ENCODE measurements at regions of chr2 and their contacts with region 1.

Region 1: DNA sequence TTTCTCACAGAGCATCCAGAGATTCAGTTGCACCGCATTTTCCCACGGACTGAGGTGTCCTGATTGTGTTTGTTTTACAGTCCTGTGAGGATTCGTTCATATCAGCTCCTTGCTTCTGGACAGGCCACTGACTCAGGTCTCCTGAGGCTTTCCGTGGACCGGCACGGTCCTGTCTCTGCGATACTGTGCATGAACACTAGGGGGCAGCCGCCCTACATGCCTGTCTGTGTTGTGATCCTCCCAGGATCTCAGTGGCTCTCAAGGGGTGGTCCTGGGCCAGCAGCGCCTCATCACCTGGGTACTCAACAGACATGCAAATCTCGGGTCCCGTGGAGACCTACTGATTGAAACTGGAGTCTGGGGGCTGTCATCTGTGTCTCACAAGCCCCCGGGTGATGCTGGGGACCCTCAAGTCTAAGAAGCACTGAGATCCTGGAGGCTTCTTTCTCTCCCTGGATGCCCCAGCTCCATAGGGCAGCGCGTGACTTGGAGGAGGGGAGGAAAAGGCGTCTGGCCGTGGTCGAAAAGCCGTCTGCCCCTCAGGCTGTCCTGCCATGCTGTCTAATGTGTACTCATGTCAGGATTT is 28.9 kb downstream of the IL1R2 start:
- DNase-seq: peak; percentile 61
- ATAC-seq: peak; percentile 99
- H3K4me3 ChIP-seq: no peak overlapping the region
- H3K27ac ChIP-seq: no peak overlapping the region
- H3K4me1 ChIP-seq: no peaks in the 10 kb centered on the region
- H3K27me3 ChIP-seq: no peaks in the 10 kb centered on the region
- CTCF ChIP-seq: peak; percentile 89 to 98 (median 97)
- POLR2A ChIP-seq: no peak
- RAD21 ChIP-seq: peak; percentile 97

Region 2: GRCh38 chr2:101998896-101999789 is 21.5 kb before region 1 on chr2:
- CTCF ChIA-PET with region 1: no interaction called
- POLR2A ChIA-PET with region 1: no interaction called
- RAD21 ChIA-PET with region 1: no interaction called
- intact Hi-C with region 1: no loop called
- DNase-seq: no peak
- ATAC-seq: peak; percentile 71
- H3K4me3 ChIP-seq: no peak overlapping the region
- H3K27ac ChIP-seq: no peak overlapping the region
- H3K4me1 ChIP-seq: no peaks in the 10 kb centered on the region; a peak in 1 of 4 replicates
- H3K27me3 ChIP-seq: no peaks in the 10 kb centered on the region
- CTCF ChIP-seq: no peak
- POLR2A ChIP-seq: no peak
- RAD21 ChIP-seq: no peak

Region 3: GRCh38 chr2:102063941-102064678 is 43.4 kb after region 1 on chr2:
- CTCF ChIA-PET with region 1: no interaction called
- POLR2A ChIA-PET with region 1: no interaction called
- RAD21 ChIA-PET with region 1: no interaction called
- intact Hi-C with region 1: no loop called
- DNase-seq: peak; percentile 33
- ATAC-seq: peak; percentile 79
- H3K4me3 ChIP-seq: no peak overlapping the region
- H3K27ac ChIP-seq: no peak overlapping the region
- H3K4me1 ChIP-seq: peaks cover 11 to 33% of the 10 kb centered on the region in 2 experiments
- H3K27me3 ChIP-seq: no peaks in the 10 kb centered on the region
- CTCF ChIP-seq: no peak
- POLR2A ChIP-seq: no peak
- RAD21 ChIP-seq: no peak

Region 4: GRCh38 chr2:102235491-102235890 is 214.8 kb after region 1 on chr2:
- CTCF ChIA-PET with region 1: interaction called, 76 read pairs
- POLR2A ChIA-PET with region 1: interaction called, 6 read pairs
- RAD21 ChIA-PET with region 1: interaction called, 15 to 16 read pairs
- intact Hi-C with region 1: loop called (anchors 1 kb)
- DNase-seq: no peak
- ATAC-seq: peak; percentile 85
- H3K4me3 ChIP-seq: no peak overlapping the region
- H3K27ac ChIP-seq: no peak overlapping the region
- H3K4me1 ChIP-seq: peaks cover 0 to 9% of the 10 kb centered on the region in 2 experiments; a peak in 3 of 4 replicates
- H3K27me3 ChIP-seq: no peaks in the 10 kb centered on the region
- CTCF ChIP-seq: peak; percentile 48 to 59 (median 55); a peak in 5 of 6 replicates
- POLR2A ChIP-seq: no peak
- RAD21 ChIP-seq: peak; percentile 67

Region 5: GRCh38 chr2:102487761-102488466 is 467.2 kb after region 1 on chr2:
- CTCF ChIA-PET with region 1: no interaction called
- POLR2A ChIA-PET with region 1: no interaction called
- RAD21 ChIA-PET with region 1: no interaction called
- intact Hi-C with region 1: no loop called
- DNase-seq: no peak
- ATAC-seq: no peak
- H3K4me3 ChIP-seq: no peak overlapping the region
- H3K27ac ChIP-seq: no peak overlapping the region
- H3K4me1 ChIP-seq: no peaks in the 10 kb centered on the region; a peak in 1 of 4 replicates
- H3K27me3 ChIP-seq: peaks cover 8% of the 10 kb centered on the region; the same call in 1 of the 2 replicates
- CTCF ChIP-seq: no peak
- POLR2A ChIP-seq: no peak
- RAD21 ChIP-seq: no peak

Measured in HCT116 (cell line).